IMR-90 (cell line): ENCODE measurements at regions of chr3 and their contacts with region 1.

Region 1: DNA sequence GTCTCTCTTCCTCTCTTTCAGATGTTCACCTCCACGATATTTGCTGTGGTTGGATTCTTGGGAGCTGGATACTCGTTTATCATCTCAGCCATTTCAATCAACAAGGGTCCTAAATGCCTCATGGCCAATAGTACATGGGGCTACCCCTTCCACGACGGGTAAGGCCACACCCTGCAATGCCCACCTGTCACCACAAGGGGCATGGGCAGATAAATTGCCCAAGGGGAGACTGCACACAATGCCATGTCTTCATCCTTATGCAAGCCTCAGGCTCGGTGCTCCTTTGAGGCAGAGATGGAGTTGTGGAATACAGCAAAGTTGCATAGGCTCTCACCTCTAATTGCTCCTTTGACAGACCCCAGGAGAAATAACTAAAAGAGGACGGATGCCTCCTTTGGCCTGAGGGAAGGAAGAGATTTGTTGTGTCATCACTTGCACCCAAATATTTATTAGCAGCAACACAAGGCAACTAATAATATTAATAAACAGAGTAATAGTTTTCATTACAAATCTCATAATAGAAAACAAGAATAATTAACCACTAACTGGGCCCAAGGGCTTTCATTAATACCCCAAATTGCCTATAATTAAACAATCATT is 13.2 kb downstream of the TM4SF4 start:
- DNase-seq: no peak
- ATAC-seq: no peak
- H3K4me3 ChIP-seq: no peak overlapping the region
- H3K27ac ChIP-seq: no peak overlapping the region
- H3K4me1 ChIP-seq: peaks cover 2% of the 10 kb centered on the region
- H3K27me3 ChIP-seq: no peaks in the 10 kb centered on the region
- CTCF ChIP-seq: no peak; the same call in 1 of the 2 replicates
- POLR2A ChIP-seq: no peak
- RAD21 ChIP-seq: no peak

Region 2: DNA sequence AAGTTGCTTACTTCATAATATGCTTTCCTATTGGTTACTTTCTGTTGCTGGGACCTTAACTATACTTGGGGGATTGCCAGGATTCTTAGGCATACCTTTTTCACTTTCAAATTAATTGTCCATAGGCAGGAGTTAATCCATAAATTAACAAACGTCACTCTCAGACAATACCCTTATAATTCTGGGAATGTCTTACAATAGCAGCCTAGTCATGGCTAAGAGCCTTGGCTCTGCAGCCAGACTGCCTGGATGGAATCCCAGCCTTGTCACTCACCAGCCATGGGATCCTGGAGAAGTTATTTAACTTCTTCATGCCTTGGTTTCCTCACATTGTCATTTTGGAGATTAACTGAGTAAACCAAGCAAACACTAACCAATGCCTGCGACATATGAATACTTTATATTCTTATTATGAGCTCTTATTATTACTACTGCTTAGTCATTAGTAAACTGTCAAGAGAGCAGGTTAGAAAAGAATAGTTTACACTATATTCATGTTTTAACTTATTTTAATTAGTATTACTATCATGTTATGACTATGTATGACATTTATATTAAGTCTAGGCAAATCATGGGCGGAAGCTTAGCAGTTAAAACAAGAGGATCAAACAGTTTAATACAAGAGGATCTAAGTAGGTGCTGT is 467.4 kb before region 1 on chr3:
- CTCF ChIA-PET with region 1: no interaction called
- POLR2A ChIA-PET with region 1: no interaction called
- dilution Hi-C with region 1: no loop called
- in situ Hi-C with region 1: no loop called
- intact Hi-C with region 1: no loop called
- DNase-seq: peak; percentile 37
- ATAC-seq: no peak
- H3K4me3 ChIP-seq: no peak overlapping the region
- H3K27ac ChIP-seq: no peak overlapping the region
- H3K4me1 ChIP-seq: peaks cover 34% of the 10 kb centered on the region
- H3K27me3 ChIP-seq: no peaks in the 10 kb centered on the region
- CTCF ChIP-seq: no peak
- POLR2A ChIP-seq: no peak
- RAD21 ChIP-seq: no peak

Region 3: GRCh38 chr3:149115114-149115513 is 372.6 kb before region 1 on chr3:
- CTCF ChIA-PET with region 1: interaction called, 3 read pairs
- POLR2A ChIA-PET with region 1: no interaction called
- dilution Hi-C with region 1: no loop called
- in situ Hi-C with region 1: loop called (anchors 5 kb)
- intact Hi-C with region 1: no loop called
- DNase-seq: no peak
- ATAC-seq: no peak
- H3K4me3 ChIP-seq: no peak overlapping the region
- H3K27ac ChIP-seq: no peak overlapping the region
- H3K4me1 ChIP-seq: no peaks in the 10 kb centered on the region
- H3K27me3 ChIP-seq: no peaks in the 10 kb centered on the region
- CTCF ChIP-seq: no peak
- POLR2A ChIP-seq: no peak
- RAD21 ChIP-seq: no peak

Region 4: GRCh38 chr3:150303776-150304175 is 816.1 kb after region 1 on chr3:
- CTCF ChIA-PET with region 1: no interaction called
- POLR2A ChIA-PET with region 1: no interaction called
- dilution Hi-C with region 1: no loop called
- in situ Hi-C with region 1: no loop called
- intact Hi-C with region 1: no loop called
- DNase-seq: no peak
- ATAC-seq: no peak
- H3K4me3 ChIP-seq: no peak overlapping the region
- H3K27ac ChIP-seq: no peak overlapping the region
- H3K4me1 ChIP-seq: peaks cover 15% of the 10 kb centered on the region
- H3K27me3 ChIP-seq: no peaks in the 10 kb centered on the region
- CTCF ChIP-seq: no peak
- POLR2A ChIP-seq: no peak
- RAD21 ChIP-seq: no peak